ENCODE measurements at regions of chr19 and their contacts with region 1.

Region 1: GRCh38 chr19:7145494-7146485 is 76.3 kb downstream of the ZNF557 start:
- DNase-seq: no peak
- H3K4me3 ChIP-seq: no peak overlapping the region
- H3K27ac ChIP-seq: peak overlapping the region; percentile 11 to 63
- H3K4me1 ChIP-seq: no peaks in the 10 kb centered on the region
- H3K27me3 ChIP-seq: no peaks in the 10 kb centered on the region
- CTCF ChIP-seq: no peak
- POLR2A ChIP-seq: no peak

Region 2: DNA sequence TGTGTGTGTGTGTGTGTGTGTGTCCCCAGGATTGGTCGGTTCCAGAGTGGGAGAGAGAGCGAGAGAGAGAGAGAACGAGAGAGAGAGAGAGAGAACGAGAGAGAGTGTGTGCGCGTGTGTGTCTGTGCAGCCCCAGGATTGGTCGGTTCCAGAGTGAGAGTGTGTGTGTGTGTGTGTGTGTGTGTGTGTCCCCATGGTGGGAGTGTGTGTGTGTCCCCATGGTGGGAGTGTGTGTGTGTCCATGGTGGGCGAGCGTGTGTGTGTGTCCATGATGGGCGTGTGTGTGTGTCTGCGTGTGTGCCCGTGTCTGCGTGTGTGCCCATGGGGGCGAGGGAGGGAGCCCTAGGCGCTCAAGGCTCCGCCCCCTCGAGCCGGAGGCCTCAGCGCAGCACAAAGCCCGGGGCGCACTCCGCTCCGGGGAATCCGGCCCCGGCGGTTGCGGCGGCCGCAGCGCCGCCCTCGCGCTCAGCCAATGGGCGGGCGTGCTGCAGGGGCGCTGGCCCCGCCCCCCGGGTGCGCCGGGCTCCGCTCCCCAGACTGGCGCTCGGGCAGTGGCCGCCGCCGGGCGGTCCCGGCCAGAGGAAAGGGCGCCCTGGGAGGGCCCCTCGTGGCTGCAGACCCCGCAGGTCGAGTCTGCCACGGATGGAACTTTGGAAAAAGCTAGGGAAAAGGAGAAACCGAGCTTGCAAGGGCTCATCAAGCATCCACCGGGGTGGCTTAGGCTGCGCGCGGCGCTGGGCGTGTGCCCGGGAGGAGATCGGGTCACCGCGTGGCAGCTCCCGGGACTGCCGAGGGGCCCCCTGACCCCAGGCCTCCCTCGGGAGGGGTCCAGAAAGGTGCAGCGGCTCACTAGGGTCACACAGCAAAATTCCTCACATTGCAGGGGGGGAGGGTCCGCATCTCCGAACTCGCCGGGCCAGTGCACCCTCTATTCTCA is 52.2 kb after region 1 on chr19:
- intact Hi-C with region 1: loop called (anchors 2 kb)
- DNase-seq: peak; percentile 92 to 94
- H3K4me3 ChIP-seq: peak overlapping the region; percentile 76 to 89
- H3K27ac ChIP-seq: peak overlapping the region; percentile 92 to 96
- H3K4me1 ChIP-seq: no peaks in the 10 kb centered on the region
- H3K27me3 ChIP-seq: no peaks in the 10 kb centered on the region
- CTCF ChIP-seq: peak in 2 of 4 experiments; percentile 16 to 48
- POLR2A ChIP-seq: peak; percentile 81 to 92

Region 3: DNA sequence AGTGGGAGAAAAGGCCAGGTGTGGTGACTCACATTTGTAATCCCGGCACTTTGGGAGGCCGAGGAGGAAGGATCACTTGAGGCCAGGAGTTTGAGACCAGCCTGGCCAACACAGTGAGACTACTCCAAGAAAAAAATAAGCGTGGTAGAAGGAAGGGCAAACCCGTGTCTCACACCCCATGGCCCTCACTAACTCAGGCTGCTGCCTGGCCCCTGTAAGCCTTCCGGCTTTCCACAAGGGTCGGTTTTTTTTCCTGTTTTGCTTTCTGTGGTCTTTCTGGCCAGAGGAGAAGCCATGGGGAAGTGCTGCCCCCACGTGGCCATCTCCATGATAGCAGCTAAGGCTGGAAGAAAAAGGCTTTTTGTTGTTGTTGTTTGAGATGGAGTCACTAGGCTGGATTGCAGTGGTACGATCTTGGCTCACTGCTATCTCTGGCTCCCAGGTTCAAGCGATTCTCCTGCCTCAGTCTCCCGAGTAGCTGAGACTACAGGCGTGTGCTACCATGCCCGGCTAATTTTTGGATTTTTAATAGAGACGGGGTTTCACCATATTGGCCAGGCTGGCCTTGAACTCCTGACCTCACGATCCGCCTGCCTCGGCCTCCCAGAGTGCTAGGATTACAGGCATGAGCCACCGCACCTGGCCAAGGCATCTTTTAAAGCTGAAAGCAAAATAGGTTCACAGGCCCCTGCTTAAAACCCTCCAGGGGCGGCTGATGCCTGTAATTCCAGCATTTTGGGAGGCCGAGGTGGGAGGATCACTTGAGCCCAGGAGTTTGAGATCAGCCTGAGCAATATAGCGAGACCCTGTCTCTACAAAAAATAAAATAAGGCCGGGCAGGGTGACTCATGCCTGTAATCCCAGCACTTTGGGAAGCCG is 195.4 kb after region 1 on chr19:
- intact Hi-C with region 1: loop called (anchors 10 kb)
- DNase-seq: peak; percentile 85 to 87
- H3K4me3 ChIP-seq: no peak overlapping the region
- H3K27ac ChIP-seq: peak overlapping the region; percentile 27 to 36
- H3K4me1 ChIP-seq: no peaks in the 10 kb centered on the region
- H3K27me3 ChIP-seq: no peaks in the 10 kb centered on the region
- CTCF ChIP-seq: peak; percentile 94 to 97 (median 96)
- POLR2A ChIP-seq: no peak